Activated CD4-positive, alpha-beta T cell treated with anti-CD3 and anti-CD28 coated beads, Interleukin-2, amount 10 ng/mL, durations not matched to agents 24 days and 14 days (primary cell): ENCODE measurements at regions of chr3 and their contacts with region 1.

Region 1: GRCh38 chr3:139389458-139390209 is at the start of gene COPB2:
- DNase-seq: peak; percentile 99
- H3K4me3 Mint-ChIP-seq: peak within 1 kb of the TSS; percentile 93
- H3K27ac Mint-ChIP-seq: peak within 1 kb of the TSS; percentile 97
- H3K4me1 Mint-ChIP-seq: peaks cover 35% of the 10 kb centered on the region
- H3K27me3 Mint-ChIP-seq: peaks cover 6% of the 10 kb centered on the region
- total RNA-seq, gene COPB2: 99.0 and 103 TPM in 2 replicates

Region 2: GRCh38 chr3:139343895-139344856 is 45.5 kb before region 1 on chr3 and contains the start of gene MRPS22:
- intact Hi-C with region 1: loop called (anchors 1 kb)
- DNase-seq: peak; percentile 95
- H3K4me3 Mint-ChIP-seq: peak within 1 kb of the TSS; percentile 20
- H3K27ac Mint-ChIP-seq: no peak within 1 kb of the TSS
- H3K4me1 Mint-ChIP-seq: peaks cover 13% of the 10 kb centered on the region
- H3K27me3 Mint-ChIP-seq: no peaks in the 10 kb centered on the region
- total RNA-seq, gene MRPS22: 55.8 and 59.7 TPM in 2 replicates

Region 3: GRCh38 chr3:139353920-139354556 is 35.6 kb before region 1 on chr3:
- intact Hi-C with region 1: loop called (anchors 1 kb)
- DNase-seq: no peak
- H3K4me3 Mint-ChIP-seq: no peak overlapping the region
- H3K27ac Mint-ChIP-seq: no peak overlapping the region
- H3K4me1 Mint-ChIP-seq: peaks cover 16% of the 10 kb centered on the region
- H3K27me3 Mint-ChIP-seq: no peaks in the 10 kb centered on the region

Region 4: DNA sequence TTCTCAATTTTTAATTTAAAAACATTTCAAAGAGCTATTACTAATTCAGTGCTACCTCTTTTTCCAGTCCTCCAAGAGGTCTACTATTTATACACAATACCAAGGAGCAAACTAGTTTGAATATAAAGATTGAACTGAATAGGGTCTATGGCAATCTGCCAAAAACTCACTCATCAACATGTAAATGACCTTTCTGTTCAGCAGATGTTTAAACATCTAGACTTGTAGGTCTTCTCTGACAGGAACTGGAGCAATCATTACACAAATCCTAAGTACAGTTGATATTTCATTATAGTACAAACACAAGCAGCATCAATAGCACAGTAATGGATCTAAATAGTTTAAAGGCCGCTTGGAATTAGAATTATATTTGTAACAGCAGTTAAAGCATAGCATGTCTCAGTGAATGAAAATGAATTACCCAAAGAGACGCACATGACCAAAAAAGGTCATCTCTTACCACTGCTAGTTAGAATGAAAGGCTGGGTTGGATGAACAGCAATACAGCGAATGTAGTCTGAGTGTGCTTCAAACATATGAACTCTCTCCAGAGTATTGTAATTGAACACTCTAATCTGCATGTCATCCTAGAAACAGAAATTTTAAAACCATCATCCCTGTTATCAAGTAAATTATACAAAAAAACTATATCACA is 10.9 kb before region 1 on chr3:
- intact Hi-C with region 1: no loop called
- DNase-seq: no peak
- H3K4me3 Mint-ChIP-seq: no peak overlapping the region
- H3K27ac Mint-ChIP-seq: no peak overlapping the region
- H3K4me1 Mint-ChIP-seq: peaks cover 12% of the 10 kb centered on the region
- H3K27me3 Mint-ChIP-seq: no peaks in the 10 kb centered on the region

Region 5: DNA sequence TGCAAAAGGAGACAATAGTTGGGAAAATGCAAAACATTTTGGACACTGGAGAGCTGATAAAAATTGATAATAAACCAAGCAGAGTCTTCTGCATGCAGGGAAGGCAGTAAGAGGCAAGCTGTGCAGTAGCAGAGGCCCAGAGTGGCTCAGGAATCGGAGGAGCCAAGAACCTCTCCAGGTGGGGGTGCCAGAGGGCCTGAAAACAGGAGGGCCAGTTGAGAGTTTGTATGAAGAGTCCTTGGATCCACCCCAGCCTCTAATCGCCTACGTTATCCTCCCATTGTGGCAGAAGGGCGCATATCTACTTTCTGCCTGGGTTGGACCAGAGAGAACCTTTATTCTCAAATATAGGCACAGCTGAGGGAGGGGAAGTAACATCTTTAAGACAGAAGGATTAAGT is 198.8 kb after region 1 on chr3:
- intact Hi-C with region 1: no loop called
- DNase-seq: no peak
- H3K4me3 Mint-ChIP-seq: no peak overlapping the region
- H3K27ac Mint-ChIP-seq: no peak overlapping the region
- H3K4me1 Mint-ChIP-seq: peaks cover 4% of the 10 kb centered on the region
- H3K27me3 Mint-ChIP-seq: peaks cover 4% of the 10 kb centered on the region

Region 6: GRCh38 chr3:140403608-140404007 is 1014.0 kb after region 1 on chr3:
- intact Hi-C with region 1: no loop called
- DNase-seq: no peak
- H3K4me3 Mint-ChIP-seq: no peak overlapping the region
- H3K27ac Mint-ChIP-seq: no peak overlapping the region
- H3K4me1 Mint-ChIP-seq: no peaks in the 10 kb centered on the region
- H3K27me3 Mint-ChIP-seq: no peaks in the 10 kb centered on the region

Region 7: GRCh38 chr3:140941434-140942220 is 1552.0 kb after region 1 on chr3 and contains the start of gene SLC25A36:
- intact Hi-C with region 1: loop called (anchors 10 kb)
- DNase-seq: peak; percentile 98
- H3K4me3 Mint-ChIP-seq: peak within 1 kb of the TSS; percentile 97
- H3K27ac Mint-ChIP-seq: peak within 1 kb of the TSS; percentile 96
- H3K4me1 Mint-ChIP-seq: peaks cover 27% of the 10 kb centered on the region
- H3K27me3 Mint-ChIP-seq: peaks cover 25% of the 10 kb centered on the region
- total RNA-seq, gene SLC25A36: 56.3 and 58.9 TPM in 2 replicates